ENCODE measurements at regions of chr19 and their contacts with region 1.

Region 1: GRCh38 chr19:45250832-45251451 is at the start of gene MARK4:
- DNase-seq: peak; percentile 17 to 83 (median 55)
- ATAC-seq: peak; percentile 69
- H3K4me3 ChIP-seq: peak within 1 kb of the TSS; percentile 66 to 68
- H3K4me3 Mint-ChIP-seq: peak within 1 kb of the TSS; percentile 93
- H3K27ac ChIP-seq: peak within 1 kb of the TSS; percentile 20 to 67
- H3K27ac Mint-ChIP-seq: peak within 1 kb of the TSS; percentile 72
- H3K4me1 ChIP-seq: peaks cover 39% of the 10 kb centered on the region
- H3K4me1 Mint-ChIP-seq: peaks cover 38% of the 10 kb centered on the region
- H3K27me3 ChIP-seq: no peaks in the 10 kb centered on the region
- H3K27me3 Mint-ChIP-seq: no peaks in the 10 kb centered on the region
- CTCF ChIP-seq: no peak
- total RNA-seq, gene MARK4: 17.2 to 19.9 TPM

Region 2: GRCh38 chr19:44752816-44753618 is 497.9 kb before region 1 on chr19:
- CTCF ChIA-PET with region 1: no interaction called
- POLR2A ChIA-PET with region 1: no interaction called
- intact Hi-C with region 1: no loop called
- DNase-seq: peak; percentile 88 to 99 (median 93)
- ATAC-seq: peak; percentile 76
- H3K4me3 ChIP-seq: peak overlapping the region; percentile 13 to 68
- H3K4me3 Mint-ChIP-seq: peak overlapping the region; percentile 95
- H3K27ac ChIP-seq: peak overlapping the region; percentile 83 to 95
- H3K27ac Mint-ChIP-seq: peak overlapping the region; percentile 97
- H3K4me1 ChIP-seq: peaks cover 64% of the 10 kb centered on the region
- H3K4me1 Mint-ChIP-seq: peaks cover 65% of the 10 kb centered on the region
- H3K27me3 ChIP-seq: no peaks in the 10 kb centered on the region
- H3K27me3 Mint-ChIP-seq: no peaks in the 10 kb centered on the region
- CTCF ChIP-seq: no peak

Region 3: DNA sequence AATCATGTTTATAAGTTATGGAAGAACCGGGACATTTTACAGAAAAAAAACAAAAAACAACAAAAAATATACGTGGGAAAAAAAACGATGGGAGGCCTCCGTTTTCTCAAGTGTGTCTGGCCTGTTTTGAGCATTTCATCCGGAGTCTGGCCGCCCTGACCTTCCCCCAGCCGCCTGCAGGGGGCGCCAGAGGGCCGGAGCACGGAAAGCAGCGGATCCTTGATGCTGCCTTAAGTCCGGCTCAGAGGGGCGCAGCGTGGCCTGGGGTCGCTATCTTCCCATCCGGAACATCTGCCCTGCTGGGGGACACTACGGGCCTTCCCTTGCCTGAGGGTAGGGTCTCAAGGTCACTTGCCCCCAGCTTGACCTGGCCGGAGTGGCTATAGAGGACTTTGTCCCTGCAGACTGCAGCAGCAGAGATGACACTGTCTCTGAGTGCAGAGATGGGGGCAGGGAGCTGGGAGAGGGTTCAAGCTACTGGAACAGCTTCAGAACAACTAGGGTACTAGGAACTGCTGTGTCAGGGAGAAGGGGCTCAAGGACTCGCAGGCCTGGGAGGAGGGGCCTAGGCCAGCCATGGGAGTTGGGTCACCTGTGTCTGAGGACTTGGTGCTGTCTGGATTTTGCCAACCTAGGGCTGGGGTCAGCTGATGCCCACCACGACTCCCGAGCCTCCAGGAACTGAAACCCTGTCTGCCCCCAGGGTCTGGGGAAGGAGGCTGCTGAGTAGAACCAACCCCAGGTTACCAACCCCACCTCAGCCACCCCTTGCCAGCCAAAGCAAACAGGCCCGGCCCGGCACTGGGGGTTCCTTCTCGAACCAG is 347.1 kb before region 1 on chr19:
- CTCF ChIA-PET with region 1: no interaction called
- POLR2A ChIA-PET with region 1: no interaction called
- intact Hi-C with region 1: loop called in 1 of 2 experiments (anchors 2 kb)
- DNase-seq: peak; percentile 55 to 85 (median 71)
- ATAC-seq: peak; percentile 73
- H3K4me3 ChIP-seq: no peak overlapping the region
- H3K4me3 Mint-ChIP-seq: no peak overlapping the region
- H3K27ac ChIP-seq: no peak overlapping the region
- H3K27ac Mint-ChIP-seq: no peak overlapping the region
- H3K4me1 ChIP-seq: peaks cover 12% of the 10 kb centered on the region
- H3K4me1 Mint-ChIP-seq: peaks cover 12% of the 10 kb centered on the region
- H3K27me3 ChIP-seq: peaks cover 7 to 25% of the 10 kb centered on the region in 2 experiments
- H3K27me3 Mint-ChIP-seq: peaks cover 23% of the 10 kb centered on the region
- CTCF ChIP-seq: peak; percentile 94